ENCODE measurements at regions of chr3 and their contacts with region 1.

Region 1: DNA sequence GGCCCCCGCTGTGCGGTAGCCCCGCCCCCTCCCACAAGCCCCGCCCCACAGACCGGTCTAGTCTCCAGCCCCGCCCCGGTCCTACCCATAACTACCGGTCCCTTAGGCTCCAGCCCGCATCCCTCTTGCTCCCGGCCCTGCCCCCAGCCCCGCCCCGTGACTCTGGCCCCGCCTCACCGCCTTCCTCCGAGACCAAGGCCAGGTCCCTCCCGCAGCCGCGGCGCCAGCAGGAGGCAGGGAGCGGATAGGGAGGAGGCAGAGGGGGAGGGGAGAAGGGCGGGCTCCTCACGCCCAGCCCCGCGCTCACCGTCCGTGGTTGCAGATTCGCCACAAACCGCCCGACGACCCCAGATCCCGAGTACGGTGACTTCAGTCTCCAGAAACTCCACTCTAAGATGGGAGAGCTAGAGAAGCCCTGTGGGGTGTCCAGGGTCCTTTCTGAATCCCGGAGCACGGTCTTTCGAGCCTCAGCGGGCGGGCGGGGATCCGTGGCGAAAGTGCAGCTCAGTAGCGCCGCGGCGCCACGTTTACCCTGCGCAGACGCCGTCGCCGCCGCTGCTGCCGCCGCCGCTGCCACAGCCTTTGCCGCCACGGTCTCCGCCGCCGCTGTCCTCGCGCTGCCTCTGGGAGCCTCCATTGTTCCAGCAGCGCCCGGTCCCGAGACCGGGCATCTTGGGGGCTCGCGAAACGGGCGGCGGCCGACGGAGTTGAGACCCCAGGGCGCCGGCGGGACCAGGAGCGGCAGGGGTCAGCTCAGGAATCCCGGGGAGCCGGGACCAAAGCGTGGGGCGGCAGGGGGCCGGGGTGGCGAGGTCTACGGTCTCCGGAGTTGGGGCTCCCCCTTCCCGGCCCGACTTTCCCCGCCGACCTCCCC is at the start of gene BRPF1:
- DNase-seq: peak; percentile 96 to 97
- H3K4me3 ChIP-seq: peak within 1 kb of the TSS; percentile 87 to 94 (median 90)
- H3K27ac ChIP-seq: peak within 1 kb of the TSS; percentile 100
- H3K4me1 ChIP-seq: peaks cover 0 to 8% (median 6%) of the 10 kb centered on the region in 4 experiments; a peak in 6 of 7 replicates
- H3K27me3 ChIP-seq: no peaks in the 10 kb centered on the region
- CTCF ChIP-seq: no peak
- EP300 ChIP-seq: peak in 1 of 2 experiments; percentile 94; a peak in 2 of 3 replicates
- POLR2A ChIP-seq: peak in 1 of 2 experiments; percentile 76; a peak in 2 of 3 replicates
- RAD21 ChIP-seq: no peak
- total RNA-seq, gene BRPF1: 21.7 and 27.7 TPM in 2 replicates

Region 2: DNA sequence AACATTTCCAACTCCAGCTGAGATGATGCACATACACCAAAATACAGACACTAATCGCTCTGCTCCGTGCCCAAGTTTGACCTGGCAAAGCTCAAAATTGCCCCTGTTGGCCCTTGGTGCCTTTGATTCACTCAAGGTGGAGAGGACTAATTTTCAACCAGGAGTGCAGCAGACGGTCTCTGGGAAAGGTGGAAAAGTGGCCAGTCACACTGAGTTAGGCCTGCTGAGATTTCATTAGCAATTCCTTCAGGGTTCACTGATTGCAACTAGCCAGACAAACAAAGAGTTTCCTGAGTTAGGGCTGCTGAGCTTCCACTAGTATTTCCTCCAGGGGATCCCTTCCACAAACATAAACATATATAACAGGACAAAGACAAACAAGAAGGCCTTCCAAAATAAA is 149.1 kb before region 1 on chr3:
- CTCF ChIA-PET with region 1: interaction called, 11 read pairs
- POLR2A ChIA-PET with region 1: no interaction called
- DNase-seq: no peak
- H3K4me3 ChIP-seq: no peak overlapping the region; a peak in 1 of 8 replicates
- H3K27ac ChIP-seq: no peak overlapping the region
- H3K4me1 ChIP-seq: peaks cover 2 to 14% (median 6%) of the 10 kb centered on the region in 4 experiments; a peak in 4 of 7 replicates
- H3K27me3 ChIP-seq: no peaks in the 10 kb centered on the region
- CTCF ChIP-seq: no peak
- EP300 ChIP-seq: no peak
- POLR2A ChIP-seq: no peak
- RAD21 ChIP-seq: no peak

Region 3: DNA sequence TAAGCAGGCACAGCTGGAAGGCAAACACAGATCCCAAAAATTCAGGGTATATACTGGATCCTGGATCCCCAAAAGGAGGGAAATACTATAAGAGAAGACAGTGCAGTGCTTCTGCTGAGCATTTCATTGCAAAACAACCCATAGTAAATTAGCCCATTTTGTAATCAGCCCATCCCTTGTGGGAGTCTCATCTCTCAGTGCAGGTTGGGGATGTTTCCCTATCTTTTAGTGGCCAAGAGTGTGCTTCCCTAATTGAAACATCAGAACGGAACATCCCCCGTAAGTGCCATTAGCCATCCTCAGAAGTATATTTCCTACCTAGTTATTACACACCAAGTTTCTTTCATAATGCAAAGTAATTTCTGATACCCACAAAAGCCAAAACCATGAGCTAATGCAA is 93.3 kb before region 1 on chr3:
- CTCF ChIA-PET with region 1: no interaction called
- POLR2A ChIA-PET with region 1: no interaction called
- DNase-seq: no peak
- H3K4me3 ChIP-seq: no peak overlapping the region
- H3K27ac ChIP-seq: no peak overlapping the region
- H3K4me1 ChIP-seq: no peaks in the 10 kb centered on the region
- H3K27me3 ChIP-seq: no peaks in the 10 kb centered on the region
- CTCF ChIP-seq: no peak
- EP300 ChIP-seq: no peak
- POLR2A ChIP-seq: no peak
- RAD21 ChIP-seq: no peak

Region 4: DNA sequence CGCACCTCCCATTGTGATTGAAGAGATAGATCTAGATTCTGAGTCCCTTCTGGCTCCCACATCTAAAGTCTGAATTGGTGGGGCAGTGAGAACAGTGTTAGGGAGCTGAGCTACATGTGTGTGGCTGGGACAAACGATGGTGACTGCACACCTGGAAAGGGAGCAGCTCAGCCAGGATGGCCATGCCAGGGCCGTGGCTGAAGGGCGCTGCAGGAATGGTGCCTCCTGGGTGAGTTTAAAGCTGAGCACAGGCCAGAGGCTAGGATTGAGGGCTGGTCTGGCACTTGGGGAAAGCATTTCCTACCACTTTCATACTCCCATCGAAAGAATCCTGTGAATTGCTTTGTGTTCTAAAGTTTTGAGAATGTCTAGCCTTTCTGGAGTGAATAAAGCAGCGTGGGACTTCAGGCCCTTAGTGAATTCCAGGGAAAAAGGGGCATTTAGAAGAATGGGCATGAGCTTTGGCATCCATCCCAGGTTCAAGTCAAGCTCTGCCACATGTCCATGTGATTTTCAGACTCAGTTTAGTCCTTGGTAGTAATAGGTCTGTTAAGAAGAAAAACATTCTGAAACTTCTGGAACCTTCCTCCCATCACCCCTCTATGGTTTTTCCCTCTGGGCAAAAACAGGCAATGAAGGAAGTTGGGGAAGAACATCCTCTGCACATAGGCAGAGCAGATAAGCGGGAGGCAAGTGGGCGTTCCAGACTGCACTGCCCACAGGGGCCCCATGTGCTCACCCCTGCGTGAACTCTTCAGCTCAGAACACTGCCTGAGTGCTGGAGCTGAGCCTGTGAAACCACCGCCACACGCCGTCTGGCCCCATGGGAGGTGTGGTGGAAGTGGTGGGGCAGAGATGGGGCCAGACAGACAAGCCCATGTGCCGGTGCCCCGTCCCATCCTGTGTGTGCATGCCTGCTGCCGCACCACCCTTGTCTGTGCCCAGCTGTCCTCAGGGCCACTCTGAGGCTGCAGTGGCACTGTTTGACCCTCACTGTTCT is 40.7 kb before region 1 on chr3:
- CTCF ChIA-PET with region 1: interaction called, 16 read pairs
- POLR2A ChIA-PET with region 1: no interaction called
- DNase-seq: no peak
- H3K4me3 ChIP-seq: no peak overlapping the region
- H3K27ac ChIP-seq: no peak overlapping the region
- H3K4me1 ChIP-seq: no peaks in the 10 kb centered on the region
- H3K27me3 ChIP-seq: no peaks in the 10 kb centered on the region
- CTCF ChIP-seq: no peak
- EP300 ChIP-seq: no peak
- POLR2A ChIP-seq: no peak
- RAD21 ChIP-seq: no peak

Region 5: DNA sequence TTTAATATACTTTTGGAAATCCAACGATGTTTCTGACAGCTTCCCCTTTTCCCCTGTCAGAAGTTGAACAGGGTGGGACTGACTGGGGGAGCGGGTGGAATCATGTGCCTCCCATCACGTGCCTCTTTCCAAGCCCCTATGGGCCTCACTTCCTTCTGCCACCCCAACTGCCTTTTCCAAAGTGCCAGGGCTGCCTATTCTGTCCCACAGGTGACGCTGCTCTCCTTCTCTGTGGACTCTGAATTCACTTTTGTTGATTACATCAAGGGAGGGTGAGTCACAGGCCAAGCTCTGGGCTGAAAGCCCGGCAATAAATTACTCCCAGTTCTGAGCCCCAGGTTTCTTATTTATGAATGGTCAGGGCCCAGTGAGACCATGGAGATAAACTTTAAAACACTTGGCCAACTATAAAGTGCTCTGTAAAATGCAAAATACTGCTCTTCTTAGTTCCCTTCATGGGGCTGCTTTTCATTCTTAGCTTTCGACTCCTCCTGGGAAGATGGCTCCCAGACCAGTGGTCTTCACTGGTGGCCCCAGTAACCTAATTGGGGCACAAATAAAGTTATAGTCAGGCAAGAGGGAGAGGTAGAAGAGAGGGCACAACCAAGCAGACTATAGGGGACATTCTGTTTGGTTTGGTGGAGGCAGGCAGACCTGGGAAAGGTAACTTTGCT is 15.5 kb before region 1 on chr3:
- CTCF ChIA-PET with region 1: interaction called, 84 read pairs
- POLR2A ChIA-PET with region 1: interaction called, 3 read pairs
- DNase-seq: no peak
- H3K4me3 ChIP-seq: no peak overlapping the region
- H3K27ac ChIP-seq: no peak overlapping the region
- H3K4me1 ChIP-seq: peaks cover 0 to 3% (median 0%) of the 10 kb centered on the region in 4 experiments; a peak in 1 of 7 replicates
- H3K27me3 ChIP-seq: peaks cover 0 to 3% (median 0%) of the 10 kb centered on the region in 4 experiments; a peak in 2 of 7 replicates
- CTCF ChIP-seq: peak; percentile 3 to 36 (median 19); a peak in 3 of 4 replicates
- EP300 ChIP-seq: no peak
- POLR2A ChIP-seq: no peak
- RAD21 ChIP-seq: peak; percentile 29 to 42; a peak in 3 of 4 replicates

Region 6: DNA sequence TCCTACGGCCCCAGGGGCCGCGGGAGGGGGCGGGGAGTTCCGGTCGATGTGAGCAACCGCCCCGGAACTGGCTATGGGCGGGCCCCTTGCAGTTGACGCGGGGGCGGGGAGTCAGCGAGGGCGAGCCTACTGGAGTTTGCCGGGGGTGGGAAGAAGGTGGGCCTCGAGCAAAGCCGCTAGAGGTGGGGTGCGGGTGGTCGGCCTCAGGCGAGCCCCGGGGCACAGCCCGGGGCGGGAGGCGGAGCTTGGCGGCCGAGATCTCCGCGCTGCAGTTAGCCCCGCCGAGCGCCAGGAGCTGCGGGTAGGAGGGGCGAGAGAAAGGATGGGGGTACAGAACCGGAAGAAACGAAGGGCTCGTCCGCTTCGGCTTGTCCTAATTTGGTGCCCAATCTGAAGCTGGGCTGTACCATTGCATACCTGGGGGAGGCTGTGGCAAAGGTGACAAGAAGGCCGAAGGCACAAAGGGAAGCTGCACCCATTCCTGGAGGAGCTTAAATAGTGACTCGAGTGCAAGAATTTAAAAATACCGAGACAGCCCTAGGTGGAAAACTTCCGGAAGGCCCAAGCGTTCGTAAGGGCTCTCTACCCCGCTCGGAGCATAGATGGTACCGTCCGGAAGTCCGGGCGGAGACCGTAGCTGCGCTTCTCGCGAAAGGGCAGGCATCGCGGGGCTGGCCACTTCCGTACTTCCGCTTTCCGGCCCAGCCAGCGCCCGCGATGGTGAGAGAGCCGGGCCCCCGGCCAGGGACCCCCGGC is 61.1 kb after region 1 on chr3 and contains the starts of genes ARPC4 and TADA3:
- CTCF ChIA-PET with region 1: interaction called, 4 read pairs
- POLR2A ChIA-PET with region 1: interaction called, 17 read pairs
- DNase-seq: peak; percentile 80 to 89
- H3K4me3 ChIP-seq: peak within 1 kb of the TSS; percentile 89 to 98 (median 95)
- H3K27ac ChIP-seq: peak within 1 kb of the TSS; percentile 98
- H3K4me1 ChIP-seq: peaks cover 0 to 8% (median 0%) of the 10 kb centered on the region in 4 experiments; a peak in 2 of 7 replicates
- H3K27me3 ChIP-seq: no peaks in the 10 kb centered on the region
- CTCF ChIP-seq: no peak
- EP300 ChIP-seq: peak in 1 of 2 experiments; percentile 97; a peak in 2 of 3 replicates
- POLR2A ChIP-seq: peak; percentile 57 to 79; a peak in 2 of 3 replicates
- RAD21 ChIP-seq: no peak
- total RNA-seq, gene ARPC4: 153 and 154 TPM in 2 replicates
- total RNA-seq, gene TADA3: 50.3 and 55.2 TPM in 2 replicates